AG04449 (cell line): ENCODE measurements at regions of chr12 and their contacts with region 1.

Region 1: GRCh38 chr12:91240386-91241095 is 57.9 kb upstream of the DCN start:
- DNase-seq: no peak
- H3K4me3 ChIP-seq: no peak overlapping the region
- CTCF ChIP-seq: no peak

Region 2: DNA sequence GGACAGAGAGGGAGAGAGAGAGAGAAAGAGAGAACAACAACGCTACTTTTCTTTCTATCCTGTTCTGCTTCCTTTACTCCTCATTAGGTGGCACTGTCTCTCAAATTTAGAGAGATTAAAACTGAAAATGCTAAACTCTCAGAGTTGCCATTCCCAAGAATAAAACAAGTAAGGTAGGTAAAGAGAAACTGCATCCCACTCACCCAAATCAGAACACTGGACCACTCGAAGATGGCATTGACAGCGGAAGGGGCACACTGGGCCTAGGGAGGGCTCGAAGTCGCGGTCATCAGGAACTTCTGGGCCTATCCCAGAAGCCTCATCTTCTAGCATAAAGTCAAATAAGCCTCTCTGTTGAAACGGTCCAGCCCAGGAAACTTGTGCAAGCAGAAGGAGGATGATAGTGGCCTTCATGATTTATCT is 62.4 kb before region 1 on chr12:
- CTCF ChIA-PET with region 1: interaction called, 11 read pairs
- POLR2A ChIA-PET with region 1: no interaction called
- DNase-seq: no peak
- H3K4me3 ChIP-seq: peak overlapping the region; percentile 40
- CTCF ChIP-seq: peak; percentile 41